ENCODE measurements at regions of chr17 and their contacts with region 1.

Region 1: GRCh38 chr17:40309031-40309948 is at the start of gene RARA:
- DNase-seq: peak; percentile 49 to 66 (median 56)
- ATAC-seq: peak; percentile 80
- H3K4me3 ChIP-seq: peak within 1 kb of the TSS; percentile 22; the same call in 1 of the 2 replicates
- H3K27ac ChIP-seq: peak within 1 kb of the TSS; percentile 49; the same call in 2 of the 3 replicates
- H3K4me1 ChIP-seq: peaks cover 35 to 43% of the 10 kb centered on the region in 2 experiments
- H3K27me3 ChIP-seq: no peaks in the 10 kb centered on the region
- CTCF ChIP-seq: no peak
- EP300 ChIP-seq: no peak
- POLR2A ChIP-seq: no peak
- RAD21 ChIP-seq: peak in 1 of 2 experiments; percentile 8; a peak in 1 of 4 replicates
- polyA plus RNA-seq, gene RARA: 0.10 TPM

Region 2: DNA sequence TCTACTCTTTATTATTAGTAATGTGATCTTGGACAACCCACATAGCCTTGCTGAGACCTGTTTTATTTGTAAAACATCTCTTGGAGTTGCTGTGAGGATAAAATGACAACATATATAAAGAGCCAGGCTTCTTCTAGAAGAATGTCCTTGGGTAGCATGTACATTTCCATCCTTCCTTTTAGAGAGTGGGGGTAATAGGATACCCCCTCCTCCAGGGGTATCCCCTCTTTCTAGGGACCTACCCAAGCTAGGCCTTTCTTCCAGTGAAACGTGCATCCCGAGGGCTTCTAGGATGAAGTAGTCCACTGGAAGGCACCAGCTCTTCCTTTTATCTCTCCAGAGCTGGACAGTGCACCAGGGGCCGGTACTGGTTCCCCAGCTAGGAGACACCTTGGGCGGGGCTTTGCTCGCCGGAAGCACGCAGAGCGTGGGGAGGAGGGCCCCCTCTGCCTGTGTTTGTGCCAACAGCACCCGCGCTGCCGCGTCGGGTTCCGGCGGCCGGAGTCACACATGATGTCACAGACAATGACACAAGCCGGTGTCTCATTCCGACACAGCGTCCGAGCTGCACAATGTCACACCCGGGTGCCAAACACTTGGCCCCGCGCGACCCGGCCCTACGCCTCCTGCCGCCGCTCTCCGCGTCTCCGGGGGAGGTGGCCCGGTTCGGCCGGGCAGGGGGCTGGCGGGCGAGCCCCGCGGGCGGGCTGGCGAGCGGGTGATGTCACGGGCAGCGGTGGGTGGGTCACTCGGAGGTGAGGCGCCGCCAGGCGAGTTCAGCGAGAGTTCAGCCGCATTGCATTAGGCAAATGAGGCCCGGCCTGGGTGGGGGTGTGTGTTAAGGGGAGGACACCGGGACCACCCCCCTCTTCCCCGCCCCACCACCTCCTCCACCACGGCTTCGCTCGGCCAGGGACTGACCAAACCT is 31.9 kb after region 1 on chr17:
- CTCF ChIA-PET with region 1: no interaction called
- POLR2A ChIA-PET with region 1: interaction called, 5 read pairs
- in situ Hi-C with region 1: no loop called
- intact Hi-C with region 1: loop called (anchors 5 kb)
- DNase-seq: peak; percentile 76 to 92 (median 80)
- ATAC-seq: peak; percentile 82
- H3K4me3 ChIP-seq: peak overlapping the region; percentile 60
- H3K27ac ChIP-seq: peak overlapping the region; percentile 91
- H3K4me1 ChIP-seq: peaks cover 36 to 56% of the 10 kb centered on the region in 2 experiments
- H3K27me3 ChIP-seq: no peaks in the 10 kb centered on the region
- CTCF ChIP-seq: peak; percentile 18 to 43 (median 33); a peak in 3 of 6 replicates
- EP300 ChIP-seq: 0 out of 2 replicates have a peak, but pooled peaks have one; percentile 23
- POLR2A ChIP-seq: no peak
- RAD21 ChIP-seq: peak in 1 of 2 experiments; percentile 33; a peak in 1 of 4 replicates